Psoas muscle (tissue), 8 donors: ENCODE measurements at regions of chr17 and their contacts with region 1.

Region 1: GRCh38 chr17:33131620-33132019 is 140.0 kb downstream of the SPACA3 start:
- DNase-seq: no peak
- ATAC-seq: no peak
- H3K4me3 ChIP-seq: no peak overlapping the region
- H3K27ac ChIP-seq: no peak overlapping the region
- H3K4me1 ChIP-seq: no peaks in the 10 kb centered on the region
- H3K27me3 ChIP-seq: peaks cover 0 to 15% (median 10%) of the 10 kb centered on the region in 3 donors
- CTCF ChIP-seq: no peak

Region 2: DNA sequence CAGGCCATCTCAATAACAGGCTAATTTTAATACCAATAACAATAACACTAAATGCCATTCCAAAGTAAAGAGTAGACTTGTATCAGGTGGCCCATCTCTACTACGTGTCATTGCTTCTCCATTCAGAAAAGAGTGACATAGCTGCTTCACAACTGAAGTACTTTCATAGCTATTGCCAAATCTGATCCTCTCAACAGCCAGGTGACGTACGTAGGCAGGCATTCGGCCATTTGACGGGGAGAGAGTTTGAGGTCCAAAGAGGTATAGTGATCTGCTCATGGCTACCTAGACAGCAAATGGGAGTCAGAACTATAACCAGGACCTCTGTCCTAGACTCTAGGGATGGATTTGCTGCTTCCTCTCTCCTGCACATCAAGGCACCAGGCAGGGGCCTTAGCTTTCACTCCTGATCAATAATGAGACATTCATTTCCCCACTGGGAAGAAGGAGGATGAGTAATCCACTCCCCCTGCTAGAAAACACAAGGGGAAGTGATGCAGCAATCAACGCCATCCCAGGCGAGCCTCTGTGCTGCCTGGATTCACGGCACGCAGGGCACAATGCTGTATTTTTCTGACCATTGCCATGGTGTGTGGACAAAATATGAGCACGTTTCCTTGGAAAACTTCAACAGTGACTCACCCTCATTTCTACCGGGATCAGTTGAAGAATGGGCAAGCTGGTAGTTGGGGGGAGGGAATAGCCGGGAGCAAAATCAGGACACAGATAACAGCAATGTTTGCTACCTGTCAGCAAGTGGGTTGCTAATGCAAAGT is 59.0 kb before region 1 on chr17:
- intact Hi-C with region 1: loop called in 1 of 2 experiments (anchors 10 kb)
- DNase-seq: no peak
- ATAC-seq: no peak
- H3K4me3 ChIP-seq: no peak overlapping the region
- H3K27ac ChIP-seq: no peak overlapping the region
- H3K4me1 ChIP-seq: no peaks in the 10 kb centered on the region
- H3K27me3 ChIP-seq: peaks cover 0 to 5% (median 1%) of the 10 kb centered on the region in 3 donors
- CTCF ChIP-seq: no peak

Region 3: GRCh38 chr17:33169580-33170285 is 38.1 kb after region 1 on chr17:
- intact Hi-C with region 1: no loop called
- DNase-seq: no peak
- ATAC-seq: no peak
- H3K4me3 ChIP-seq: no peak overlapping the region
- H3K27ac ChIP-seq: no peak overlapping the region
- H3K4me1 ChIP-seq: peaks cover 4% of the 10 kb centered on the region
- H3K27me3 ChIP-seq: peaks cover 0 to 2% (median 0%) of the 10 kb centered on the region in 3 donors
- CTCF ChIP-seq: no peak

Region 4: DNA sequence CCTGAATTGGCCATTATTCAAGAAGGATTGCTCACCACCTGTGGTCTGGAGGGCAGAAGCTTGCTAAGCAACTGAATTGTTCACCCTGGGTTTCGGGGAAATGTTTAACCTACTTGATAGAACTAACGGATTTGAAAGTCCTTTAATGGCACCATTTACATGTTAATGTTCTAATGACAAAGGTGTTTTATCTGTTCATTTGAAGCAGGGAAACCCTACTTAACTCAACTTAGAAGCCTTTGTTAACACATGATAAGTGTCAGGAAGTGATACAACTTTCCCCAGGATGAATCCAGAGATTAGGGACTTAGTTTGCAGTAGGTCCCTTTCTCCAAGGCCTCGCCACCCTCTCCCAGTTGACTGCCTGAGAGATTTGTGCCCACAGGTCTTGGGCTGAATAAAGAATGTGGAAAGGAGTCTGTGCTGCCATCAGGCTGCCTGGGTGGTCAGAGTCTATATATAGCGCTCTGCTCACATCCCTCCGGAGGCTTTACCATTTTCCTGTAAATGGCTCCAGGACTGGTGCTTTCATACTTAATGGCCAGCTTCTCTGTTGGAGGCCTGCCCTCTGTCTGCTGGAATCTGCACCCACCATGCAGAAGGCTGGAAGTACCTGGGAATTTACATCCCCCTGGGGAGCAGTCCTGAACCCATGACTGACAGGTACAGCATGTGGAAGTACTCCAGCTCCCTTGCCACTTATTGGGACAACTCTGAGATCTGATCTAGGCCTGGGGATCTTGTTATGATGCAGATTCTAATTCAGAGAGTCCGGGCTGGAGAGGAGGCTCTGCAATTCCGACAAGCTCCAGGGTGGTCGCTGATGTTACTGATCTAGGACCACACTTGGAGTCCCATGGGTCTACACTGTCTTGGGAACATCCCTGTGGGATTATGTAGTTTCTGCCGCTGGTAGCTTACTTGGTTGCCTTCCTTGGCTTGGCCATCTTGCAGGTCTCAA is 61.6 kb after region 1 on chr17:
- intact Hi-C with region 1: no loop called
- DNase-seq: no peak
- ATAC-seq: no peak
- H3K4me3 ChIP-seq: no peak overlapping the region
- H3K27ac ChIP-seq: no peak overlapping the region
- H3K4me1 ChIP-seq: no peaks in the 10 kb centered on the region
- H3K27me3 ChIP-seq: peaks cover 0 to 4% (median 0%) of the 10 kb centered on the region in 3 donors
- CTCF ChIP-seq: no peak